ENCODE measurements at regions of chr3 and their contacts with region 1.

Region 1: GRCh38 chr3:194064380-194065332 is 71.3 kb upstream of the HES1 start:
- DNase-seq: no peak
- ATAC-seq: no peak
- H3K4me3 Mint-ChIP-seq: no peak overlapping the region
- H3K27ac Mint-ChIP-seq: no peak overlapping the region
- H3K4me1 Mint-ChIP-seq: peaks cover 0 to 10% (median under 1%) of the 10 kb centered on the region in 4 donors
- H3K27me3 Mint-ChIP-seq: peaks cover 0 to 5% (median 2%) of the 10 kb centered on the region in 5 donors

Region 2: GRCh38 chr3:194023501-194024280 is 41.0 kb before region 1 on chr3:
- POLR2A ChIA-PET with region 1: no interaction called
- DNase-seq: peak in 2 of 10 donors; percentile 23 to 33
- ATAC-seq: peak; percentile 44 to 74
- H3K4me3 Mint-ChIP-seq: no peak overlapping the region
- H3K27ac Mint-ChIP-seq: peak overlapping the region in 1 of 10 donors; percentile 25
- H3K4me1 Mint-ChIP-seq: peaks cover 10 to 24% (median 21%) of the 10 kb centered on the region in 4 donors
- H3K27me3 Mint-ChIP-seq: peaks cover 0 to 7% (median 3%) of the 10 kb centered on the region in 5 donors

Region 3: DNA sequence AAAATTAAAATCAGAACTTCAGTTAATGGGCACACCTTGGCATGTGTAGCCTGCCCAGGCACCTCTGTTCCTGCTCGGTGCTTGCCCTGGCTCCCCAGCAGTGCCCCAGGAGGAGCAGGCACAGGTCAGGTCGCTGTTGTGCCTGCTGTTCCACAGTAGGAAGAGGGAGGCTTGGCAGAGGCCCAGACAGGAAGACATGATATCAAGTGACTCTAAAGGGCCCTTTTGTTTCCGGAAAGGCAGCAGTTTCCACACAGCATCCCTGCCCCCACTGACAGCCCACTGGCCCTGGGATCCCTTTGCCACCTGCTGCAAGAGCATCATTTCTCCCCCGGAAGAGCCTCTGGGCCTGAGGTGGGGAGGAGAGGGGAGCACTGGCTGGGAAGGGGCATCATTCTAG is 30.8 kb after region 1 on chr3:
- POLR2A ChIA-PET with region 1: no interaction called
- DNase-seq: no peak
- ATAC-seq: peak in 1 of 2 donors; percentile 33
- H3K4me3 Mint-ChIP-seq: no peak overlapping the region
- H3K27ac Mint-ChIP-seq: peak overlapping the region in 7 of 10 donors; percentile 11 to 73 (median 60)
- H3K4me1 Mint-ChIP-seq: peaks cover 9 to 22% (median 13%) of the 10 kb centered on the region in 4 donors
- H3K27me3 Mint-ChIP-seq: peaks cover 0 to 18% (median 3%) of the 10 kb centered on the region in 5 donors

Region 4: DNA sequence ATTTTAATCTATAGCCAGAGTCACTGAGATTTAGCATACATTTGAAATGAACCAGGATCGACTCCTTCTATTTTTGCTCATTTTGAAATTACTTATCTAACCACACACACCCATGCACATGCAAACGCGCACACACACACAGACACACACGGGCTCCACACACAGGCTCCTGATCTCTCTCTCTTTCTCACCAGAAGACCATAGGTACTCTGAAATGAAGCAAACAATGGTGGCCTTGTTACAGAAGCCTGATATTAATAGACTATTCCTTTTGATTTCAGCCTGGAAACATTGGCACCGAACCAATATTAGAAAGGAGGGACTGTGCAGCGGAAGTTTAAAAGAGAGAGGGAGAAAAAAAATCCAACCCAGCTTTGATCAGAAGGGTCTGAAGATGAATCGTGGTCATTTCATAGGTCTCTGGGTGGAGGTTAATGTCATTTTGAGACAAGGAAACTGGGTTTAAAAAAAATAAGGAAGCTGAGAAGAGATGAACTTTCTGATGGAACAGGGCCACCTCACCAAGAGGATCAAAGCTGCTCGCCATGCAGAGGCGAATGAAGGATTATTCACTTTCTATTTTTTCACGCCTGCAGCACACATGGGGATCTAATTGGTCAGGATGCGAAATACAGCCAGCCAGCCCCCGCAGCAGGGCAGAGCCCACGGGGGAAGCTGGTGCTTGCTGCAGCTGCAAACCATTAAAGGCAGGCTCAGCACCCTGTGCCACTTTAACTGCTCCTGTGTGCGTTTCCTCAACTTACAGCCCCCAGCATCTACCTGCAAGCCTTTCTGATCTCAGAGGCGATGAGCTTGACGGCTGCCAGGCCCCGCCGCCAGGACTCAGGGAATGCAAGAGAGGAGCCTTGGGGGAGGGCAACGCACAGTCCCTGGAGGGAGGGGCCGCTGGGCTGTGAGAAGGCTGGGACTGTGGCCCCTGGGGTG is 160.1 kb after region 1 on chr3:
- POLR2A ChIA-PET with region 1: interaction called, 12 read pairs
- DNase-seq: no peak
- ATAC-seq: no peak
- H3K4me3 Mint-ChIP-seq: no peak overlapping the region
- H3K27ac Mint-ChIP-seq: peak overlapping the region in 1 of 10 donors; percentile 65
- H3K4me1 Mint-ChIP-seq: peaks cover 4 to 10% (median 9%) of the 10 kb centered on the region in 4 donors
- H3K27me3 Mint-ChIP-seq: peaks cover 19 to 49% (median 40%) of the 10 kb centered on the region in 5 donors

Measured in naive thymus-derived CD8-positive, alpha-beta T cell (primary cell).